MCF 10A (cell line): ENCODE measurements at regions of chr21 and their contacts with region 1.

Region 1: GRCh38 chr21:34078915-34079314 is 5.5 kb downstream of the MRPS6 start:
- DNase-seq: no peak
- H3K4me3 Mint-ChIP-seq: no peak overlapping the region
- H3K27ac Mint-ChIP-seq: peak overlapping the region; percentile 27
- H3K4me1 Mint-ChIP-seq: peaks cover 63% of the 10 kb centered on the region
- H3K27me3 Mint-ChIP-seq: no peaks in the 10 kb centered on the region
- CTCF ChIP-seq: no peak

Region 2: DNA sequence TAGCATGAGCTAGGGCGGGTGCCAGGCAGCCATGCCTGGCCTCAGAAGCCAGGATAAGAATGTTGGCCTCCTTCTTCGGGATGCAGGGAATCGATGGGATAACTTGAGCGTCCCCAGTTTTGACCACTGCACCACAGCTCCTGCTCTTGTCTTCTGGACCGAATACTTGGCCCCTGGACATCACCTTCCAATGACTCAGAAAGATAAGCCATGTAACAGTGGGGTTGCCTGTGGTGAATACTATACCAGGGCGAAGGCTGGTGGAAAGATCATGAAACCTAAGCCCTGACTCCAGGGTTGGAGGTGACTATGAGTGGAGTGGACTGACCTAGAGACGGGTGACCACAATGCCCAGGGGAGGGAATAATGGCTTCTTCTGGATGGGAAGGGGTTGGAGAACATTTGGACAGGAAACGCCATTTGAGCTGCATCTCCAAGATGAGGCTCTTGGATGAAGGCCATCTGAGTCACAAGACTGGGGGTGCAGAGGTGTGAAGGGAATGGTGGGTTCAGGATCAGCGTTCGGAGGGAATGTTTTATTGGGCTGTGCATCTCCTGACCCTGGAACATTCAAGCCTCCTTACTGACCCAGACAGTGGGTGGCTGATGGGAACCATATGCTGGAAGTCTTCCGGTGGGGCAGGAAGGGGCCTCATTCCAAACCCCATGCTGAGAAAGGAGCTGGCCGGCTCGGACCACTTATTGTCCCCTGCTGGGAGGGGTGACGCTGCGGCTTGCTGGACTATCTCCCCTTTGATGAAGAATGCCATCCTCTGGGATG is 266.4 kb after region 1 on chr21:
- CTCF ChIA-PET with region 1: interaction called, 6 read pairs
- POLR2A ChIA-PET with region 1: interaction called, 10 read pairs
- intact Hi-C with region 1: loop called (anchors 5 kb)
- DNase-seq: no peak
- H3K4me3 Mint-ChIP-seq: no peak overlapping the region
- H3K27ac Mint-ChIP-seq: no peak overlapping the region
- H3K4me1 Mint-ChIP-seq: no peaks in the 10 kb centered on the region
- H3K27me3 Mint-ChIP-seq: no peaks in the 10 kb centered on the region
- CTCF ChIP-seq: no peak